Mammary epithelial cell (primary cell): ENCODE measurements at regions of chr6 and their contacts with region 1.

Region 1: GRCh38 chr6:87029711-87030314 is 65.1 kb downstream of the CGA start:
- DNase-seq: peak; percentile 27
- H3K4me3 ChIP-seq: no peak overlapping the region
- H3K27ac ChIP-seq: no peak overlapping the region
- H3K4me1 ChIP-seq: no peaks in the 10 kb centered on the region
- H3K27me3 ChIP-seq: no peaks in the 10 kb centered on the region
- CTCF ChIP-seq: peak; percentile 64 to 71

Region 2: GRCh38 chr6:85923013-85923430 is 1106.8 kb before region 1 on chr6:
- CTCF ChIA-PET with region 1: no interaction called
- dilution Hi-C with region 1: no loop called
- in situ Hi-C with region 1: no loop called
- intact Hi-C with region 1: loop called (anchors 1 kb)
- DNase-seq: peak; percentile 60
- H3K4me3 ChIP-seq: no peak overlapping the region
- H3K27ac ChIP-seq: no peak overlapping the region
- H3K4me1 ChIP-seq: no peaks in the 10 kb centered on the region
- H3K27me3 ChIP-seq: no peaks in the 10 kb centered on the region
- CTCF ChIP-seq: peak; percentile 58 to 82